Panc1 (cell line): ENCODE measurements at regions of chr12 and their contacts with region 1.

Region 1: DNA sequence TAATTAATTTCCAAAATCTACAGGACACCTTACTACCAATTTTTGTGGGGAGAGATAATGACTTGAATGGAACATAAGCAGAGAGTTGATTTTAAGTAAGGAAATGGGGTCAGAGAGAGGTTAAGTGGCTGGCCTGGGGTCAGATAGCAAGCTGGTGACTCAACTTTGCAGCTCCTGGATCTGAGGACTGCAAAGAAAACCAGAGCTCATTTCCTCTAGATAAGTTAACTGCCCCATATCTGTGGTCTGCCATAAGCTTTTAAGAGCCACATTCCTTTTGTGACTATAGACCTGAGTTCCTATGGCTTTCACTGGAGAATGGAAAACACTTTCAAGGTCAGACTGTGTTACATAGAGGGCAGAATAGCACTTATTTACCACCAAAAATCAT is 201.2 kb upstream of the PRICKLE1 start:
- DNase-seq: no peak
- ATAC-seq: peak; percentile 95
- H3K4me3 ChIP-seq: no peak overlapping the region
- H3K27ac ChIP-seq: peak overlapping the region; percentile 91
- H3K4me1 ChIP-seq: peaks cover 22% of the 10 kb centered on the region
- H3K27me3 ChIP-seq: no peaks in the 10 kb centered on the region
- CTCF ChIP-seq: no peak

Region 2: DNA sequence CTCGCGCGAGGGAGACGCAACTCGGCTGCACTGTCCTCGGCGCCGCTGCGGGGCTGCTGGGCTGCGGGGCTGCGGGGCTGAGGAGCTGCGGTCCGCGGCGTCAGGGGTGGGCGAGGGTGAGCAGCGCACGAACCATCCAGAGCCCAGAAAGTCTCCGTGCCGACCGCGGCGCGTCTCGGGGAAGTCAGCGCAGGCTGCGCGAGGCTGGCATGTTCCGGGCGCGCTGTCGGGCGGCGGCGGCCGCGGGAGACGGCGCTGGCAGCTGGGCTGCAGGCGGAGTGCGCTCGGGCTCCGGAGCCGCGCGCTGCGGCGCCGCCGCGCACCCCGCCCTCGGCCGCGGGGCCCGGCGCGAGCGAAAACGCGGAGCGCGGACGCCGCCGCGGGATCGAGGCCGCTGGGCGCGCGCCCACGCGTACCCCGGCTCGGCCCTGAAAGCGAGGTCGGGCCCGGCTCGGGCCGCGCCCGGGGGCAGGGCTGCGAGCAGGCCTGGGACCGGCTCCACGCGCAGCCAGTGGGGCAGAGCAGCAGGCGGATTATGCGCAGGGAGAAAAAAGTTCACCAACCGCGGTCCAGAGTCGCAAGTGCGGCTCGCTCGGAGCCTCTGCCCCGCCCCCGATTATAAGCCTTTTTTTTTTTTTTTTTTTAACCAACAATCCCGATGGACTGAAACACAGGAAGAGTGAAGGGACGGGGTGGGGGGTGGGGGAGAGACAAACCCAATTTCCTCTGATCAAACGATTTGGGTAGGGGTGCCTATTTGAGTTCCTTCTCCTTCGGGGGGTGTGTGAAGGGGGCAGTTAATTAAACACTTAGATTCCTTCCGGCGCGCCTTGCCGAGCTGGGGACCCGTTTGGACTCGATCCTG is 201.1 kb before region 1 on chr12 and contains the start of gene PRICKLE1:
- CTCF ChIA-PET with region 1: interaction called, 3 read pairs
- POLR2A ChIA-PET with region 1: no interaction called
- in situ Hi-C with region 1: no loop called
- intact Hi-C with region 1: loop called (anchors 10 kb)
- DNase-seq: no peak
- ATAC-seq: peak; percentile 79
- H3K4me3 ChIP-seq: peak within 1 kb of the TSS; percentile 64 to 67
- H3K27ac ChIP-seq: peak within 1 kb of the TSS; percentile 77
- H3K4me1 ChIP-seq: peaks cover 19% of the 10 kb centered on the region
- H3K27me3 ChIP-seq: peaks cover 15% of the 10 kb centered on the region
- CTCF ChIP-seq: no peak
- total RNA-seq, gene PRICKLE1: 20.1 TPM

Region 3: GRCh38 chr12:42921741-42922504 is 131.2 kb after region 1 on chr12:
- CTCF ChIA-PET with region 1: no interaction called
- POLR2A ChIA-PET with region 1: no interaction called
- in situ Hi-C with region 1: no loop called
- intact Hi-C with region 1: loop called (anchors 10 kb)
- DNase-seq: no peak
- ATAC-seq: peak; percentile 95
- H3K4me3 ChIP-seq: no peak overlapping the region
- H3K27ac ChIP-seq: peak overlapping the region; percentile 89
- H3K4me1 ChIP-seq: peaks cover 19% of the 10 kb centered on the region
- H3K27me3 ChIP-seq: no peaks in the 10 kb centered on the region
- CTCF ChIP-seq: no peak

Region 4: GRCh38 chr12:43436597-43436996 is 645.8 kb after region 1 on chr12:
- CTCF ChIA-PET with region 1: no interaction called
- POLR2A ChIA-PET with region 1: no interaction called
- in situ Hi-C with region 1: no loop called
- intact Hi-C with region 1: no loop called
- DNase-seq: no peak
- ATAC-seq: no peak
- H3K4me3 ChIP-seq: no peak overlapping the region
- H3K27ac ChIP-seq: no peak overlapping the region
- H3K4me1 ChIP-seq: no peaks in the 10 kb centered on the region
- H3K27me3 ChIP-seq: no peaks in the 10 kb centered on the region
- CTCF ChIP-seq: no peak